Ascending aorta (tissue), 2 donors: ENCODE measurements at regions of chr15 and their contacts with region 1.

Region 1: DNA sequence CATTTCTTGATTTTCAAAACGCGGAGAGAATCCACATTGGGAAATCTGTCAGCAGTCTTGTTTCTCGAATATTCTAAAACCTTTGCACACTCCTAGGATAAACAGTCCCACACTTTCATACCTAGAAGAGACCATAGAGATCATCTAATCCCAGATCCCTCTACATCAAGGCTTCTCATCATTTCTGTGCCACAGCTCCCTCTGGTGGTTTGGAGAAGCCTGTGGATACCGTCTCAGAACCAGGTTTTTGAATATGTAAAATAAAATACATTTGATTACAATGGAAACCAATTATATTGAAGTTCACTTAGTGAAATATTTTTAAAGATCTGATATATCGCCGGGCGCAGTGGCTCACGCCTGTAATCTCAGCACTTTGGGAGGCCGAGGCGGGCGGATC is 211.9 kb upstream of the GOLGA6L4 start:
- DNase-seq: no peak
- H3K4me3 ChIP-seq: no peak overlapping the region
- H3K27ac ChIP-seq: no peak overlapping the region
- H3K4me1 ChIP-seq: no peaks in the 10 kb centered on the region
- H3K27me3 ChIP-seq: no peaks in the 10 kb centered on the region
- CTCF ChIP-seq: peak in 2 of 3 experiments; percentile 47 to 55

Region 2: DNA sequence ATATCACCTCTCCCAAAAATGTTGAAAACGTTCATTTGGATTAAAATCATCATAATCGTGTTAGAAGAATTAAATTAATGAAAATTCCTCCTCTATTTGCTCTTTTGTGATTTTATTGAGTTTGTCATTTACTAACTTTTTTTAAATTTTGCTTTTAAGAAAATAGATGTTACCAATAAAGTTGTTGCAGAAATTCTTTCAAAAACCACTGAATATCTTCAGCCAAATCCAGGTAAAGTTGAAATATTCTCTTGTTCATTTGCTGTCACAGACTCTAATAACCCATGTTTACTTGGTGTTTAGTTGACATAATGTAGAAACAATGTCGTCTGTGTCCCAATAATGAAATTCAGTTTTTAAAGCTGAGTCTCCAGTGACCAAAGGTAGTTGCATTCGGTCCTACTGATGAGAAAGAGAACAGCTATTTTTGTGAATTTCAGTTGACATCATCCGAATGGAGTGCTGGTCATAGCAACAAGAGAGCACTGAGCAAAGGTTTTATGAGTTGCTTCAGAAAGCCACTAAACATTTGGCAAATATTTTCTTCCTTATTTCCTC is 458.6 kb before region 1 on chr15:
- intact Hi-C with region 1: loop called (anchors 2 kb)
- DNase-seq: no peak
- H3K4me3 ChIP-seq: no peak overlapping the region
- H3K27ac ChIP-seq: no peak overlapping the region
- H3K4me1 ChIP-seq: no peaks in the 10 kb centered on the region
- H3K27me3 ChIP-seq: no peaks in the 10 kb centered on the region
- CTCF ChIP-seq: no peak

Region 3: GRCh38 chr15:83904107-83905040 is 119.3 kb before region 1 on chr15:
- intact Hi-C with region 1: loop called (anchors 10 kb)
- DNase-seq: no peak
- H3K4me3 ChIP-seq: no peak overlapping the region
- H3K27ac ChIP-seq: peak overlapping the region; percentile 35 to 39
- H3K4me1 ChIP-seq: peaks cover 0 to 3% of the 10 kb centered on the region in 2 donors
- H3K27me3 ChIP-seq: no peaks in the 10 kb centered on the region
- CTCF ChIP-seq: no peak

Region 4: DNA sequence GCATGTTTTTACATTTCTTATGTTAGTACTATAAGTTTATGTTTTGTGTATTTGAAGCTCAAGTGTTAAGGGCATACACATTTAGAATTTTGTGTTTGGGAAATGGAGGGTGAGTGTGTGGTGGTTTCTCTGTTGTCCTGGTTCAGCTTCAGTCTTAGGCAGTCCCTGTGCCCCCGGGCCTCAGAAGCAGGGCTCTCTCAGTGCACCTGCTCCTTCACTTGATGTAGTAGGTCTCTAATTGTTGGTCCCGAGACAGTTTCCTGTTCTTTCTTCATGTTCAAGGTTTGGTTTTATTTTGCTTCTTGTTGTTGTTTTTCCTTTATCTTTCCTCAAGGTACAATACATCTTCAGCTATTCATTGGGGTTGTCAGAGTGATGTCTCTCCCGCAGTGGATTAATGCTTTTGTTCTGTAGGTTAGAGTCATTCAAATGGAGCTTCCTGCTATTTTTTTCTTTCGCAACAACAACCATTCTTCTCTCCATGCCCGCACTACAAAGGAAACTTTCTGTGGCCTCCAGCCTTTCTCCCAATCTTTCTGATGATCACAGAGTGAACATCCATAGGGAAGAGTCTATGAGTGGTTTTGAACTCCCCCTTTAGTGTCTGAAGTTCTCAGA is 34.2 kb after region 1 on chr15:
- intact Hi-C with region 1: no loop called
- DNase-seq: no peak
- H3K4me3 ChIP-seq: no peak overlapping the region
- H3K27ac ChIP-seq: no peak overlapping the region
- H3K4me1 ChIP-seq: no peaks in the 10 kb centered on the region
- H3K27me3 ChIP-seq: no peaks in the 10 kb centered on the region
- CTCF ChIP-seq: no peak